Ovary (tissue), 10 donors: ENCODE measurements at regions of chr13 and their contacts with region 1.

Region 1: DNA sequence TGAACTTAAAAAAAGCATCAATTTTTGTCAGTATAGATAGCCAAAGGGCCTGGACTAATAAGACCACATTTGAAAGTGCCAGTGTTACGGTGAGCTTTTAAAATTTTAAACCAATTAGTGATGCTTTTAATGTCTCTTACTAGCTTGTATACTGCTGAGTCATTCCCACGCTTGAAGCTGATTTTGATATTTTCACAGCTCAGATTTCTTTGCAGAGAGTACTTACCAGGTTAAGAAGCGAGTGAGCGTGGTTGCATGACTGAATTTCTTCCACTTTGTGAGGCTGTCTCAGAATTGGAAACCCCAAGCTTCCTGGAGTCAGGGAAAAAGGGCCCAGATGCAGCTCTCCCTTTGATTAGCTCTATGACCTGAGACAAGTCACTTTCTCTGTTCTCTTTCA is 74.5 kb upstream of the NBEA start:
- DNase-seq: no peak
- H3K4me3 ChIP-seq: no peak overlapping the region
- H3K27ac ChIP-seq: no peak overlapping the region
- H3K4me1 ChIP-seq: no peaks in the 10 kb centered on the region
- H3K27me3 ChIP-seq: no peaks in the 10 kb centered on the region
- CTCF ChIP-seq: no peak
- EP300 ChIP-seq: no peak
- POLR2A ChIP-seq: no peak

Region 2: DNA sequence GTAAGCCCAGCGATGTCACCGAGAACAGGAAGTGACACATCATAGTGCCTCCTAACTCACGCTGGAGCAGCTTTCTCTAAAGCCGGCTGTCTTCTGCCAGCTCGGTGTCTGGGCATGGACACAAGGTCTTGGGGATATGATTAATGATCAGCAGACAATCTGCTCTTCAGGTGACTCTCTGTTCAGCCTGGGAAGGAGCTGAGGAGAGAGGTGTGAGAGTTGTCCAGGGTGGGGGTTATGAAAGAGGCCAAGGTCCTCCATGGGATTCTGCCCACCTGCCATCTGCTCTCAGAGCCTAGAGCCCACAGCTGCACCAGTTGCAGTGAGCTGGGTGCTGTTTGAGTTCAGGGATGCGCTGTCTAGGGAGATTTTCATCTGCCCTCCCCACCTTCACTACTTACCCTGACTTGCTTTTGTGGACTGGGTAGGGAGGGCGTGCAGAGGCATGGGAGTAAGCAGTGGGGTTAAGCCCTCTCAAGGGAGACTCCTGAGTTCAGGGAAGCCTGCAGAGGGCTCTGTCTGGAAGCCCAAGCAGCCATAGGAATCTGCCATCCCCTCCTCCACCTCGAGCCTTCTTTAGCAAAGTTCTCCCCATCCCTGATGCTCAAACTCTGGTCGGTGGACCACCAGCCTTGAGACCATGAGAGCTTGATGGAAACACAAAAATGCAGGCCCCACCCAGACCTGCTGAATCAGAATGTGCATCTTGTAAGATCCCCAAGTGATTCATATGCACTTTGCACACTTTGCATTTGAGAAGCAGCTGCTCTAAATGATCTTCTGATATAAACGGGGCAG is 510.0 kb before region 1 on chr13:
- intact Hi-C with region 1: loop called in 1 of 4 experiments (anchors 5 kb)
- DNase-seq: no peak
- H3K4me3 ChIP-seq: no peak overlapping the region
- H3K27ac ChIP-seq: no peak overlapping the region
- H3K4me1 ChIP-seq: no peaks in the 10 kb centered on the region
- H3K27me3 ChIP-seq: no peaks in the 10 kb centered on the region
- CTCF ChIP-seq: no peak
- EP300 ChIP-seq: no peak
- POLR2A ChIP-seq: no peak

Region 3: GRCh38 chr13:34943436-34944273 is 76.1 kb after region 1 on chr13:
- intact Hi-C with region 1: no loop called
- DNase-seq: no peak
- H3K4me3 ChIP-seq: peak overlapping the region; percentile 100
- H3K27ac ChIP-seq: no peak overlapping the region
- H3K4me1 ChIP-seq: peaks cover 2% of the 10 kb centered on the region
- H3K27me3 ChIP-seq: no peaks in the 10 kb centered on the region
- CTCF ChIP-seq: no peak
- EP300 ChIP-seq: no peak
- POLR2A ChIP-seq: no peak